Esophagus muscularis mucosa (tissue), 4 donors: ENCODE measurements at regions of chr19 and their contacts with region 1.

Region 1: GRCh38 chr19:2064788-2065524 is 13.9 kb upstream of the MKNK2 start:
- DNase-seq: no peak
- H3K4me3 ChIP-seq: peak overlapping the region in 2 of 4 donors; percentile 2 to 16
- H3K27ac ChIP-seq: peak overlapping the region; percentile 56 to 79 (median 64)
- H3K4me1 ChIP-seq: peaks cover 32 to 56% (median 49%) of the 10 kb centered on the region in 4 donors
- H3K27me3 ChIP-seq: no peaks in the 10 kb centered on the region
- CTCF ChIP-seq: no peak
- EP300 ChIP-seq: no peak
- POLR2A ChIP-seq: no peak

Region 2: GRCh38 chr19:1905071-1905862 is 159.7 kb before region 1 on chr19 and contains the starts of genes ADAT3 and SCAMP4:
- intact Hi-C with region 1: no loop called
- DNase-seq: peak; percentile 99
- H3K4me3 ChIP-seq: peak within 1 kb of the TSS; percentile 71 to 94 (median 83)
- H3K27ac ChIP-seq: peak within 1 kb of the TSS; percentile 86 to 89 (median 86)
- H3K4me1 ChIP-seq: peaks cover 14 to 61% (median 47%) of the 10 kb centered on the region in 4 donors
- H3K27me3 ChIP-seq: no peaks in the 10 kb centered on the region
- CTCF ChIP-seq: peak in 1 of 3 experiments; percentile 20
- EP300 ChIP-seq: no peak
- POLR2A ChIP-seq: peak; percentile 43
- total RNA-seq, gene ADAT3: 3.8 to 5.6 (median 4.4) TPM
- total RNA-seq, gene SCAMP4: 26.6 to 76.5 (median 59.3) TPM

Region 3: DNA sequence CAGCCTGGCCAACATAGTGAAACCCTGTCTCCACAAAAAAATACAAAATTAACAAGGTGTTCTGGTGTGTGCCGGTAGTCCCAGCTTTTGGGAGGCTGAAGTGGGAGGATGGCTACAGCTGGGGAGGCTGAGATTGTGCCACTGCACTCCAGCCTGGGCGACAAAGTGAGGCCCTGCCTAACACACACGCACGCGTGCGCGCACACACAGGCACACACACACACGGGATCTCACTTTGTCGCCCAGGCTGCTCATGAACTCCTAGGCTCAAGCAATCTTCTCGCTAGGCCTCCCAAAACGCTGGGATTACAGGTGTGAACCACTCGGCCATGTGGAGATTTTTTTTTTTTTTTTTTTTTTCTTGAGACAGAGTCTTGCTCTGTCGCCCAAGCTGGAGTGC is 46.2 kb before region 1 on chr19:
- intact Hi-C with region 1: loop called (anchors 1 kb)
- DNase-seq: no peak
- H3K4me3 ChIP-seq: no peak overlapping the region
- H3K27ac ChIP-seq: no peak overlapping the region
- H3K4me1 ChIP-seq: peaks cover 20 to 34% (median 32%) of the 10 kb centered on the region in 4 donors
- H3K27me3 ChIP-seq: no peaks in the 10 kb centered on the region
- CTCF ChIP-seq: no peak
- EP300 ChIP-seq: no peak
- POLR2A ChIP-seq: no peak